Activated CD4-positive, alpha-beta T cell treated with anti-CD3 and anti-CD28 coated beads for 36 hours (primary cell): ENCODE measurements at regions of chr20 and their contacts with region 1.

Region 1: GRCh38 chr20:31514159-31515071 is at the start of gene HM13:
- DNase-seq: peak; percentile 93
- ATAC-seq: peak; percentile 79
- H3K4me3 Mint-ChIP-seq: no peak within 1 kb of the TSS
- H3K27ac Mint-ChIP-seq: peak within 1 kb of the TSS; percentile 58
- H3K4me1 Mint-ChIP-seq: peaks cover 6% of the 10 kb centered on the region
- H3K27me3 Mint-ChIP-seq: no peaks in the 10 kb centered on the region
- total RNA-seq, gene HM13: 108 to 111 TPM

Region 2: GRCh38 chr20:31547017-31547675 is 32.7 kb after region 1 on chr20:
- CTCF ChIA-PET with region 1: no interaction called
- POLR2A ChIA-PET with region 1: no interaction called
- intact Hi-C with region 1: loop called (anchors 1 to 2 kb)
- DNase-seq: peak; percentile 90
- ATAC-seq: peak; percentile 70
- H3K4me3 Mint-ChIP-seq: peak overlapping the region; percentile 89
- H3K27ac Mint-ChIP-seq: peak overlapping the region; percentile 96
- H3K4me1 Mint-ChIP-seq: peaks cover 28% of the 10 kb centered on the region
- H3K27me3 Mint-ChIP-seq: no peaks in the 10 kb centered on the region

Region 3: GRCh38 chr20:31738729-31739561 is 224.5 kb after region 1 on chr20 and contains the start of gene TPX2:
- CTCF ChIA-PET with region 1: interaction called, 4 read pairs
- POLR2A ChIA-PET with region 1: no interaction called
- intact Hi-C with region 1: loop called in 1 of 2 experiments (anchors 1 kb)
- DNase-seq: peak; percentile 92
- ATAC-seq: peak; percentile 97
- H3K4me3 Mint-ChIP-seq: no peak within 1 kb of the TSS
- H3K27ac Mint-ChIP-seq: no peak within 1 kb of the TSS
- H3K4me1 Mint-ChIP-seq: peaks cover 2% of the 10 kb centered on the region
- H3K27me3 Mint-ChIP-seq: no peaks in the 10 kb centered on the region
- total RNA-seq, gene TPX2: 137 to 179 TPM